Transverse colon (tissue), 4 donors: ENCODE measurements at regions of chr7 and their contacts with region 1.

Region 1: GRCh38 chr7:11427686-11428273 is 404.2 kb downstream of the THSD7A start:
- DNase-seq: no peak
- H3K4me3 ChIP-seq: no peak overlapping the region
- H3K27ac ChIP-seq: no peak overlapping the region
- H3K4me1 ChIP-seq: no peaks in the 10 kb centered on the region
- H3K27me3 ChIP-seq: no peaks in the 10 kb centered on the region
- CTCF ChIP-seq: peak; percentile 56 to 76 (median 65)
- EP300 ChIP-seq: no peak
- POLR2A ChIP-seq: no peak

Region 2: DNA sequence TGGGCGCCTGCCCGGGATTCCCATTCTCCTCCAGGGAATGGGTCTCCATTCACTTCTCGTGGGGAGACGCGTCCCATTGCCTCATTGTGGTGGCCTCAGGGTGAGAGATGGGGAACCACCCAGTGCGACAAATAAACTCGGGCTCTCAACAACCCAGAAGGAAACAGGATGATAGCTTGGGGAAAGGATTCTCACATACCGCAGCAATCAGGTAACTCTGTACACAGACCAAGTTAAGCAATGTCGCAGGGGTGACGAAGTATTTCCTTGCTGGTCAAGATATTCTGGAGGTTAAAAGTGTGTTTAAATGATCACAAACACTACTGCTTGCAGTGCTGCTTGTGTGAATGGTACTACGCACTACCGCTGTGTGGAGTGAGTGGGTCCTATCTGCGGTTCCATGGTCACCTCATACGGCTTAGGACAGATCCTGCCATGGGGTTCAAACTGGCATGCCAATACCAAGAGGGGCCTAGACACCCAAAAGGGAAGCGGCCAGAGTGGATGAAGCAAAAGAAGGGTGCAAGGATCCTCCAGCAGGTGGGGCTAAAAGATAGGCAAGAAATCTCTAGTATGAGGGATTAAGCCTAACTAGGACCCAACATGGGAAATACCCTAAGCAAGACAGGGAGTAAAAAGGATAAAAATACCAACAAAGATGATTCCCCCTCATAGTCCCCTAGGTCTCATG is 639.5 kb after region 1 on chr7:
- in situ Hi-C with region 1: loop called in 1 of 4 experiments (anchors 25 kb)
- intact Hi-C with region 1: no loop called
- DNase-seq: peak; percentile 67
- H3K4me3 ChIP-seq: no peak overlapping the region
- H3K27ac ChIP-seq: no peak overlapping the region
- H3K4me1 ChIP-seq: no peaks in the 10 kb centered on the region
- H3K27me3 ChIP-seq: no peaks in the 10 kb centered on the region
- CTCF ChIP-seq: peak; percentile 67 to 79 (median 73)
- EP300 ChIP-seq: no peak
- POLR2A ChIP-seq: no peak